CD14-positive monocyte (primary cell): ENCODE measurements at regions of chr7 and their contacts with region 1.

Region 1: GRCh38 chr7:80428161-80429054 is 83.5 kb downstream of the GNAT3 start:
- DNase-seq: peak; percentile 44 to 63 (median 51)
- H3K4me3 ChIP-seq: no peak overlapping the region
- H3K4me3 Mint-ChIP-seq: no peak overlapping the region
- H3K27ac ChIP-seq: no peak overlapping the region
- H3K27ac Mint-ChIP-seq: no peak overlapping the region
- H3K4me1 ChIP-seq: peaks cover 15 to 21% of the 10 kb centered on the region in 2 donors
- H3K4me1 Mint-ChIP-seq: peaks cover 19% of the 10 kb centered on the region
- H3K27me3 ChIP-seq: no peaks in the 10 kb centered on the region
- H3K27me3 Mint-ChIP-seq: peaks cover 0 to 1% (median 0%) of the 10 kb centered on the region in 3 donors
- CTCF ChIP-seq: peak; percentile 84

Region 2: DNA sequence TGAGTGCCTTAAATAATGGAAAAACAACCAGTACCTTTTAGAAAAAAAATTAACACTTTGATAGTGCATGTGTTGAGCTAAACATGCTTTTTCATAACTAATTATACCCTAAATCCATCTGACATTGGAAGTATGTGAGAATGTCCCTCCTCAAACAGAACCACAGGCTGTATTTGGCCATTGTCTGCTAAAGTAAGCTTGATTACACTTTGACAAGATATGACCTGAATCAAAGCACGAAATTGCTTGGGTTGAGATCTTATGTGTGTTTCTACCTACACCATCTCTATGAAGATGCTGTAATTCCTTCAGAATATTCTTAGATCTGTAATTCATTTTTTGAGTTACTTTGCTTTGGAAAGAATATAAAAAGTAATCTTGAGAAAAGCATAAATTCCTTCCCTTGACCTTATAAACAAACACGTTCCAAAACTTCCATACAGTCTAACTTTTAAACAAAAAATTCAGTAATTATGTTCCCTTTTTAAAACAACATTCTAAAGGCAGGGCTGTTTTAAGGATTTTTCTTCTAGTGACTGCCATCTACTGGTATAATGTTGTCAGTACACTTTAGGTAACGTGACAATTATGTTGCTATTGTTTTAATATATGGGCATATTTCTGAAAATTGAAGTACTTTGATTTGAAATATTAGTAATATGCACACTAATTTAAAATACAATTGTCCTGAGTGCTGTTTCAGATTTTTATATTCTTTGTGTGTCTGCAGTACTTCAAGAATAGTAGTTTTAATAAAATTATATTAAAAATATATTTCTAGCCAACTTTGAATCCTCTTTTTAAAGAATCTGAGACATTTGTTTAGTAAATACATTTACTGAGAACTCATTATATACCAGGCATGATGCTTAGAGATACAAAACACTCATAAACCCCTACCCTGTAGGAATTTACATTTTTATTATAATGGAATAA is 231.0 kb after region 1 on chr7:
- intact Hi-C with region 1: loop called (anchors 5 kb)
- DNase-seq: peak; percentile 17 to 71 (median 35)
- H3K4me3 ChIP-seq: no peak overlapping the region
- H3K4me3 Mint-ChIP-seq: no peak overlapping the region
- H3K27ac ChIP-seq: peak overlapping the region in 1 of 2 donors; percentile 63
- H3K27ac Mint-ChIP-seq: peak overlapping the region in 3 of 7 donors; percentile 20 to 54 (median 31)
- H3K4me1 ChIP-seq: peaks cover 14 to 25% of the 10 kb centered on the region in 2 donors
- H3K4me1 Mint-ChIP-seq: peaks cover 28% of the 10 kb centered on the region
- H3K27me3 ChIP-seq: no peaks in the 10 kb centered on the region
- H3K27me3 Mint-ChIP-seq: no peaks in the 10 kb centered on the region
- CTCF ChIP-seq: peak; percentile 84